ENCODE measurements at regions of chr5 and their contacts with region 1.

Region 1: DNA sequence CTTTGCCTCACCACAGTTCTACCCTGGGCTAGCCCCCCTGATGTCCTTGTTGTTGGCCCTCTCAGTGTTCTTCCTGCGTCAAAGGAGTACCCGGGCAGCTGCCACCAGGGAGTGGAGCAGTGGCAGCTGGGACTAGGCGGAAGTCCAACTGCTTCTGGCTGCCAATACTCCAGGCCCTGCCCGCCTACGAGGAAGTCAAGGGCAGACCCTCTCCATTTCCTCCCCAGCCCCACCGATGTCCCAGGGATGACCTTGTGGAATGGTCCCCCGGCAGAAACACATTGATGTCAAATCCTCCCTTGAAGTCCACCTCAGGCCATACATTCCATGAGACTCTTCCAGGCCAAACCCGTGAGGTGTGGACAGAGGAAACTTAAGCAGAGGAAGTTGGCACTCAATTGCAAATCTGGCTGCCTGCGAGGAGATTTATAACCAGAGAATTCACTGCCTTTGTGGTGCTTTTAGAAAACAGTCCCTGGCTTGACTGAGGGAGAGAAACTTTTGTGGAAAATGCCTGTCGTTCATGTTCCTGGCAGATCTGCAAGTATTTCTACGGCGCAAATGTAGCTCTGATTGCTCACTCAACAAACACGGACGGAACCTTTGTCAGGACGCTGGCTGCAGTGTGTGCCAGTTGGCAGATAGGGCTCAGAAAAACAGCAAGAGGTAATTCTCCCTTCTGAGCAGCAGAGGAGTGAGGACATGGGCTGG is 339.7 kb downstream of the RAB3C start:
- DNase-seq: peak; percentile 75 to 94
- ATAC-seq: peak; percentile 91 to 93
- H3K4me3 ChIP-seq: peak overlapping the region; percentile 33 to 40 (median 38)
- H3K27ac ChIP-seq: peak overlapping the region; percentile 90 to 95 (median 92)
- H3K4me1 ChIP-seq: peaks cover 61% of the 10 kb centered on the region in 2 donors
- H3K27me3 ChIP-seq: no peaks in the 10 kb centered on the region
- CTCF ChIP-seq: peak in 1 of 5 experiments; percentile 12
- POLR2A ChIP-seq: peak in 1 of 2 donors; percentile 20

Region 2: GRCh38 chr5:58629271-58630159 is 293.1 kb before region 1 on chr5:
- in situ Hi-C with region 1: no loop called
- intact Hi-C with region 1: no loop called
- DNase-seq: no peak
- ATAC-seq: no peak
- H3K4me3 ChIP-seq: no peak overlapping the region
- H3K27ac ChIP-seq: no peak overlapping the region
- H3K4me1 ChIP-seq: no peaks in the 10 kb centered on the region
- H3K27me3 ChIP-seq: no peaks in the 10 kb centered on the region
- CTCF ChIP-seq: no peak
- POLR2A ChIP-seq: no peak

Region 3: DNA sequence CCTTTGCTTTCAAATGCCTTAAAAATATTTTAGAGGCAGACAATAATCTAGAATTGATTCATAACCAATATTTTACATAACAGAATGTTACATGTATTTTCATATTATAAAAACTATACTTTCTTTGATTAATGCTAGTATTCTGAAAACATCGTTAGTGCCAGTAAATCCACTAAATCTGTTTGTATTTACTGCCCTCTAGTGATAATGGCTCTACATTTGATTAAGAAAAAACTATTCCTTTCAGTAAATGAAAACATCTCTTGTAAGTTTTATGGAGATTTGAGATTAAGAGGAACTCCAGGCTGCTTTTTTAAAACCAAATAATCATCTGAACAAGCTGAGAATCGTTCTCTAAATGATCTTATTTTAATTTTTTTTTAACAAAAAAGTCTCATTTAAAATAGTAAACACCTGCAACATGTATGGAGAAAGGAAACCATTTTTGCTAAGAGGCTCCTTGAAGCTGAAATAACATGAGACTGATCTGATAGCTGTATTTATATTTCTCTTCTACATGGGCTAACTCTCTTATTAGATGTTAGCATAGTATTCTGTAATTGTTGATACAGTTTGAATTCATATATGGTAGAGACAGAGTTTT is 84.9 kb after region 1 on chr5:
- in situ Hi-C with region 1: no loop called
- intact Hi-C with region 1: loop called (anchors 10 kb)
- DNase-seq: no peak
- ATAC-seq: no peak
- H3K4me3 ChIP-seq: no peak overlapping the region
- H3K27ac ChIP-seq: peak overlapping the region; percentile 58 to 79 (median 68)
- H3K4me1 ChIP-seq: peaks cover 69 to 76% of the 10 kb centered on the region in 2 donors
- H3K27me3 ChIP-seq: no peaks in the 10 kb centered on the region
- CTCF ChIP-seq: peak in 3 of 5 experiments; percentile 36 to 49 (median 46)
- POLR2A ChIP-seq: no peak